B cell (primary cell): ENCODE measurements at regions of chr13 and their contacts with region 1.

Region 1: GRCh38 chr13:52450012-52450792 is at the start of gene VPS36:
- DNase-seq: peak; percentile 97
- ATAC-seq: peak; percentile 65
- H3K4me3 ChIP-seq: peak within 1 kb of the TSS; percentile 74 to 95 (median 82)
- H3K4me3 Mint-ChIP-seq: peak within 1 kb of the TSS; percentile 92
- H3K27ac ChIP-seq: peak within 1 kb of the TSS; percentile 76 to 80
- H3K27ac Mint-ChIP-seq: peak within 1 kb of the TSS; percentile 96
- H3K4me1 ChIP-seq: peaks cover 24 to 32% of the 10 kb centered on the region in 2 donors
- H3K4me1 Mint-ChIP-seq: peaks cover 39% of the 10 kb centered on the region
- H3K27me3 ChIP-seq: no peaks in the 10 kb centered on the region
- H3K27me3 Mint-ChIP-seq: no peaks in the 10 kb centered on the region
- CTCF ChIP-seq: peak; percentile 100
- total RNA-seq, gene VPS36: 71.5 TPM in 2 replicates

Region 2: GRCh38 chr13:51583875-51584730 is 866.1 kb before region 1 on chr13 and contains the start of gene WDFY2:
- CTCF ChIA-PET with region 1: no interaction called
- POLR2A ChIA-PET with region 1: no interaction called
- intact Hi-C with region 1: loop called (anchors 10 kb)
- DNase-seq: peak; percentile 100
- ATAC-seq: peak; percentile 80
- H3K4me3 ChIP-seq: peak within 1 kb of the TSS; percentile 68 to 94 (median 91)
- H3K4me3 Mint-ChIP-seq: peak within 1 kb of the TSS; percentile 97
- H3K27ac ChIP-seq: peak within 1 kb of the TSS; percentile 81 to 88
- H3K27ac Mint-ChIP-seq: peak within 1 kb of the TSS; percentile 98
- H3K4me1 ChIP-seq: peaks cover 12 to 14% of the 10 kb centered on the region in 2 donors
- H3K4me1 Mint-ChIP-seq: peaks cover 35% of the 10 kb centered on the region
- H3K27me3 ChIP-seq: no peaks in the 10 kb centered on the region
- H3K27me3 Mint-ChIP-seq: no peaks in the 10 kb centered on the region
- CTCF ChIP-seq: no peak
- total RNA-seq, gene WDFY2: 46.1 and 47.7 TPM in 2 replicates

Region 3: DNA sequence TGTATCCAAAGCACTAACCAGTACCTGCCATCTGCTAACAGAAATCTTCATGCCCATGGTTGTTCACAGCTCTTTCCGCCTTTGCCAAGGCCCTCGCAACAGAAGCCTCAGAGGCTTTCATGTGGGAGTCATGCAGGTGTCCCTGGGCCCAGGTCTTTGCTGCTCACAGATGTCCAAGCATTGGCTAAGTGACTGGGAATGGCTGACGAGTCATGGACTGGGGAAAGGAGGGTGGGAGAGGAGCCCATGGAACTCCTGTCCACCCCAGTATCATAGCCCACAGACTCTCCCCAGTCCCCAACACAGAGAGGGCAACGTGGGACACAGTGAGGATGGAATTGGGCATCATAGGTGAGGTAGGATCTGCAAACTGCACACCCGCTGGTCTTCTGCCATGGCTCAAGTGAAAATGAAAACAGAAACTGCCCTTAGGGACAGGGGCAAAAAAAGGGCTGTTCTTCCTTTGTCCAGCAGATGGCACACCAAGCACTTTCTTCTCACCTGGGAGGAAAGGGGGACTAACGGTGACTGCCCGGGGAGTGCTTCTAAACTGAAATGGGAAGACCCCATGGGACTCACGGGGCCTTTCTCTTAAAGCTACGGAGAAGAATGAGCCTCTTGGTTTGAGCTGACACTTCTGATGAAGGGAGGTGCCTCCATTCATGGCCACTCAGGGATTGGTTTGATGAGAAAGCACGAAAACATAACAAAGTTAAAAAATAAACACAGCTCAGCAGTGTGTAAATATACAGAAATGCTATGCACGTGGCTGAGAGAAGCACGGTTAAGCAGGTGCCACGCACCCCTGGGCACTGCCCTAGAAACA is 635.2 kb before region 1 on chr13:
- CTCF ChIA-PET with region 1: interaction called, 4 read pairs
- POLR2A ChIA-PET with region 1: no interaction called
- intact Hi-C with region 1: loop called (anchors 5 kb)
- DNase-seq: peak; percentile 89
- ATAC-seq: peak; percentile 89
- H3K4me3 ChIP-seq: peak overlapping the region in 3 of 5 experiments; percentile 19 to 30 (median 20)
- H3K4me3 Mint-ChIP-seq: peak overlapping the region; percentile 7
- H3K27ac ChIP-seq: no peak overlapping the region
- H3K27ac Mint-ChIP-seq: peak overlapping the region; percentile 73
- H3K4me1 ChIP-seq: peaks cover 22 to 25% of the 10 kb centered on the region in 2 donors
- H3K4me1 Mint-ChIP-seq: peaks cover 32% of the 10 kb centered on the region
- H3K27me3 ChIP-seq: no peaks in the 10 kb centered on the region
- H3K27me3 Mint-ChIP-seq: no peaks in the 10 kb centered on the region
- CTCF ChIP-seq: peak; percentile 88

Region 4: GRCh38 chr13:52011632-52012511 is 438.3 kb before region 1 on chr13 and contains the start of gene ALG11:
- CTCF ChIA-PET with region 1: interaction called, 3 read pairs
- POLR2A ChIA-PET with region 1: no interaction called
- intact Hi-C with region 1: loop called (anchors 1 kb)
- DNase-seq: peak; percentile 99
- ATAC-seq: peak; percentile 99
- H3K4me3 ChIP-seq: peak within 1 kb of the TSS; percentile 95 to 100 (median 96)
- H3K4me3 Mint-ChIP-seq: peak within 1 kb of the TSS; percentile 99
- H3K27ac ChIP-seq: peak within 1 kb of the TSS; percentile 13 to 77
- H3K27ac Mint-ChIP-seq: peak within 1 kb of the TSS; percentile 90
- H3K4me1 ChIP-seq: peaks cover 12 to 20% of the 10 kb centered on the region in 2 donors
- H3K4me1 Mint-ChIP-seq: peaks cover 19% of the 10 kb centered on the region
- H3K27me3 ChIP-seq: peaks cover 0 to 22% (median 13%) of the 10 kb centered on the region in 4 experiments
- H3K27me3 Mint-ChIP-seq: peaks cover 24% of the 10 kb centered on the region
- CTCF ChIP-seq: no peak
- total RNA-seq, gene ALG11: 38.8 and 40.8 TPM in 2 replicates

Region 5: GRCh38 chr13:52194184-52194868 is 255.9 kb before region 1 on chr13:
- CTCF ChIA-PET with region 1: interaction called, 17 read pairs
- POLR2A ChIA-PET with region 1: interaction called, 3 read pairs
- intact Hi-C with region 1: loop called (anchors 1 kb)
- DNase-seq: peak; percentile 91
- ATAC-seq: peak; percentile 84
- H3K4me3 ChIP-seq: peak overlapping the region; percentile 69 to 97 (median 95)
- H3K4me3 Mint-ChIP-seq: peak overlapping the region; percentile 99
- H3K27ac ChIP-seq: peak overlapping the region; percentile 57 to 75
- H3K27ac Mint-ChIP-seq: peak overlapping the region; percentile 98
- H3K4me1 ChIP-seq: peaks cover 8 to 16% of the 10 kb centered on the region in 2 donors
- H3K4me1 Mint-ChIP-seq: peaks cover 21% of the 10 kb centered on the region
- H3K27me3 ChIP-seq: no peaks in the 10 kb centered on the region
- H3K27me3 Mint-ChIP-seq: no peaks in the 10 kb centered on the region
- CTCF ChIP-seq: no peak

Region 6: DNA sequence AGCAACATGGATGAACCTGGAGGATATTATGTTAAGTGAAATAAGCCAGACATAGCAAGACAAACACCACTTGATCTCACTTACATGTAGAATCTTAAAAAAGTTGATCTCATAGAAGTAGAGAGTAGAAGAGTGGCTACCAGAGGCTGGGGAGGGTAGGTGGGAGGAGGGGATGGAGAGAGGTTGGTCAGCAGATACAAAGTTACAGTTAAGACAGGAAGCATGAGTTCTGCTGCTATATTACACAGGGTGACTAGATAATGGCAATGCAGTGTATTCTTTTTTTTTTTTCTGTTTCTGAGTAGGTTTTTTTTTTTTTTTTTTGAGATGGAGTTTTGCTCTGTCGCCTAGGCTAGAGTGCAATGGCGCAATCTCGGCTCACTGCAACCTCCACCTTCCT is 29.0 kb before region 1 on chr13:
- CTCF ChIA-PET with region 1: interaction called, 17 read pairs
- POLR2A ChIA-PET with region 1: no interaction called
- intact Hi-C with region 1: no loop called
- DNase-seq: no peak
- ATAC-seq: no peak
- H3K4me3 ChIP-seq: no peak overlapping the region
- H3K4me3 Mint-ChIP-seq: no peak overlapping the region
- H3K27ac ChIP-seq: no peak overlapping the region
- H3K27ac Mint-ChIP-seq: no peak overlapping the region
- H3K4me1 ChIP-seq: no peaks in the 10 kb centered on the region
- H3K4me1 Mint-ChIP-seq: no peaks in the 10 kb centered on the region
- H3K27me3 ChIP-seq: no peaks in the 10 kb centered on the region
- H3K27me3 Mint-ChIP-seq: no peaks in the 10 kb centered on the region
- CTCF ChIP-seq: no peak

Region 7: DNA sequence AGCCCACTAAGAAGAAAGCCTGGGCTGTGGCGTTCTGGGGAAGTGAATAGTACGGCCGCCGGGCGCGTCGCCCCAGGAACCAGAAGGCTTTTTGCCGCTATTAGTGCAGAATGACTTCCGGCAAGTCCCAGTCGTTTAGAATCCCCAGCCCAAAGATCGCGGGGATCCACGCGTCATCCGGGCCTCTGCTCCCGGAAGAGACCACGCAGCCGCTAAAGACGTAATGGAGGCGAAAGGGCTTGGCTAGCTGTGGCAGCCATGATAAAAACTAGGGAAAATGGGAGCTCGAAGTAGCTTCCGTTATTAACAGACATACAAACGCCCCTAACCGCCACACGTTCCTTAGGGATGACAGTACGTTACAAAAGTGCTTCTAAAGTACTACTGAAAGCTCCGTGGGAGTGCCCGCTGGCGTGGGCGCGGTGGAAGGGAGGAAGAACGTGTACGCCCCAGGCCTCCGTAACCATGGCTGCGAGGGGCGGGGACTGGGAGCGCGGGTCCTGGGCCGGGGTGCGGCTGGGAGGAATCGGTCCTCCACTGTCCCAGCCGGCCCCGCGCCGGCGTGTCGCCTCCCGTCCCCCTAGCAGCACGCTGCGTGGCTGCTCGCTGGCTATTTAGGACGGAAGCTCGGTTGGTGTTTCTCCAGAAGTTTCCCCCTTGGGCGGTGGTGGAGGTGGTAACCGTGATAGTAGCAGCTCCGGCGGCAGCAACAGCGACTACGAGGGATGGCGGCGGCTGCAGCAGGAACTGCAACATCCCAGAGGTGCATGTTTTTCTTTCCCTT is 202.2 kb after region 1 on chr13 and contains the start of gene SUGT1:
- CTCF ChIA-PET with region 1: interaction called, 25 read pairs
- POLR2A ChIA-PET with region 1: interaction called, 7 read pairs
- intact Hi-C with region 1: loop called (anchors 1 kb)
- DNase-seq: peak; percentile 97
- ATAC-seq: peak; percentile 93
- H3K4me3 ChIP-seq: peak within 1 kb of the TSS; percentile 63 to 97 (median 95)
- H3K4me3 Mint-ChIP-seq: no peak within 1 kb of the TSS
- H3K27ac ChIP-seq: peak within 1 kb of the TSS; percentile 93 to 98
- H3K27ac Mint-ChIP-seq: no peak within 1 kb of the TSS
- H3K4me1 ChIP-seq: peaks cover 8 to 25% of the 10 kb centered on the region in 2 donors
- H3K4me1 Mint-ChIP-seq: peaks cover 11% of the 10 kb centered on the region
- H3K27me3 ChIP-seq: no peaks in the 10 kb centered on the region
- H3K27me3 Mint-ChIP-seq: no peaks in the 10 kb centered on the region
- CTCF ChIP-seq: peak; percentile 75
- total RNA-seq, gene SUGT1: 38.2 and 38.4 TPM in 2 replicates

Region 8: GRCh38 chr13:53556521-53556920 is 1106.3 kb after region 1 on chr13:
- CTCF ChIA-PET with region 1: no interaction called
- POLR2A ChIA-PET with region 1: no interaction called
- intact Hi-C with region 1: no loop called
- DNase-seq: no peak
- ATAC-seq: no peak
- H3K4me3 ChIP-seq: no peak overlapping the region
- H3K4me3 Mint-ChIP-seq: no peak overlapping the region
- H3K27ac ChIP-seq: no peak overlapping the region
- H3K27ac Mint-ChIP-seq: no peak overlapping the region
- H3K4me1 ChIP-seq: no peaks in the 10 kb centered on the region
- H3K4me1 Mint-ChIP-seq: no peaks in the 10 kb centered on the region
- H3K27me3 ChIP-seq: no peaks in the 10 kb centered on the region
- H3K27me3 Mint-ChIP-seq: no peaks in the 10 kb centered on the region
- CTCF ChIP-seq: no peak